MCF 10A (cell line): ENCODE measurements at regions of chr9 and their contacts with region 1.

Region 1: DNA sequence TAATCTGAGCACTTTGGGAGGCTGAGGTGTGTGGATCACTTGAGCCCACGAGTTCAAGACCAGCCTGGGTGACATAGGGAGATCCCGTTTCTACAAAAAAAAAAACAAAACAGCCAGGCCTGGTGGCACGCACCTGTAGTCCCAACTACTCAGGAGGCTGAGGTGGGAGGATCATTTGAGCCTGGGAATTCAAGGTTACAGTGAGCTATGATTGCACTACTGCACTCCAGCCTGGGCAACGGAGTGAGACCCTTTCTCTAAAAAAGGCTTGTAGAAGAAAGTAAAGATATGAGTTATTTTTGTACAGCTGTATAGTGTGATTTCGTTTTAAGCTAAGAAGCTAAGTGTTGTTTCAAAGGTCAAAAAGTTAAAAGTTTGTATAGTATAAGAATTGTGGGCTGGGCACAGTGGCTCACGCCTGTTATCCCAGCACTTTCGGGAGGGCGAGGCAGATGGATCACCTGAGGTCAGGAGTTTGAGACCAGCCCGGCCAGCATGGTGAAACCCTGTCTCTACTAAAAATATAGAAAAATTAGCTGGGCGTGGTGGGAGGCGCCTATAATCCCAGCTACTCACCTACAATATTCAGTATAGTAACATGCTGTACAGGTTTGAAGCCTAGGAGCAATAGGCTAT is 18.8 kb downstream of the UBE2R2 start:
- DNase-seq: no peak
- H3K4me3 Mint-ChIP-seq: no peak overlapping the region
- H3K27ac Mint-ChIP-seq: peak overlapping the region; percentile 70
- H3K4me1 Mint-ChIP-seq: peaks cover 10% of the 10 kb centered on the region
- H3K27me3 Mint-ChIP-seq: no peaks in the 10 kb centered on the region
- CTCF ChIP-seq: no peak

Region 2: DNA sequence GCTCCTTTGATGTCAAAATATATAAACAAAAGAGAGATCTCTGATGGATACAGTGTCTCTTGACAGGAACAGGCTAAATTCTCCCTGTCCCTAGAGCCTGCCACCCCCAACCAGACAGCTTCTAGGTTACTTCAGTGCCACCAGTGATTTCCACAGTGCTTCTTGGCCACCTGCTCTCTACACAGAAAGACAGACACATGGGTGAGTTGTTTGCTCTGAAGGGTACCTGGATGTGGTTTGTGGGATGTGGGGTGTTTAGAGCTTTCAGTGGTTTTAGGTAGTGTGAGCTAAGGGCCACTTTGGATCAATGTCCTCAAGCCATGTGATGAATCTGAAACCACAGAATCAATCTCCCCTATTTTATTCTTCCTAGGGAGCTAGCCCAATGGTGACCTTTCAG is 186.3 kb before region 1 on chr9:
- CTCF ChIA-PET with region 1: no interaction called
- POLR2A ChIA-PET with region 1: no interaction called
- intact Hi-C with region 1: no loop called
- DNase-seq: no peak
- H3K4me3 Mint-ChIP-seq: no peak overlapping the region
- H3K27ac Mint-ChIP-seq: no peak overlapping the region
- H3K4me1 Mint-ChIP-seq: no peaks in the 10 kb centered on the region
- H3K27me3 Mint-ChIP-seq: peaks cover 1% of the 10 kb centered on the region
- CTCF ChIP-seq: no peak

Region 3: GRCh38 chr9:33750307-33750838 is 85.4 kb before region 1 on chr9:
- CTCF ChIA-PET with region 1: no interaction called
- POLR2A ChIA-PET with region 1: no interaction called
- intact Hi-C with region 1: no loop called
- DNase-seq: no peak
- H3K4me3 Mint-ChIP-seq: peak overlapping the region; percentile 41
- H3K27ac Mint-ChIP-seq: no peak overlapping the region
- H3K4me1 Mint-ChIP-seq: no peaks in the 10 kb centered on the region
- H3K27me3 Mint-ChIP-seq: no peaks in the 10 kb centered on the region
- CTCF ChIP-seq: no peak

Region 4: GRCh38 chr9:33823801-33824200 is 11.9 kb before region 1 on chr9:
- CTCF ChIA-PET with region 1: interaction called, 3 read pairs
- POLR2A ChIA-PET with region 1: interaction called, 12 read pairs
- intact Hi-C with region 1: no loop called
- DNase-seq: no peak
- H3K4me3 Mint-ChIP-seq: no peak overlapping the region
- H3K27ac Mint-ChIP-seq: no peak overlapping the region
- H3K4me1 Mint-ChIP-seq: peaks cover 14% of the 10 kb centered on the region
- H3K27me3 Mint-ChIP-seq: no peaks in the 10 kb centered on the region
- CTCF ChIP-seq: no peak